B cell (primary cell): ENCODE measurements at regions of chr5 and their contacts with region 1.

Region 1: DNA sequence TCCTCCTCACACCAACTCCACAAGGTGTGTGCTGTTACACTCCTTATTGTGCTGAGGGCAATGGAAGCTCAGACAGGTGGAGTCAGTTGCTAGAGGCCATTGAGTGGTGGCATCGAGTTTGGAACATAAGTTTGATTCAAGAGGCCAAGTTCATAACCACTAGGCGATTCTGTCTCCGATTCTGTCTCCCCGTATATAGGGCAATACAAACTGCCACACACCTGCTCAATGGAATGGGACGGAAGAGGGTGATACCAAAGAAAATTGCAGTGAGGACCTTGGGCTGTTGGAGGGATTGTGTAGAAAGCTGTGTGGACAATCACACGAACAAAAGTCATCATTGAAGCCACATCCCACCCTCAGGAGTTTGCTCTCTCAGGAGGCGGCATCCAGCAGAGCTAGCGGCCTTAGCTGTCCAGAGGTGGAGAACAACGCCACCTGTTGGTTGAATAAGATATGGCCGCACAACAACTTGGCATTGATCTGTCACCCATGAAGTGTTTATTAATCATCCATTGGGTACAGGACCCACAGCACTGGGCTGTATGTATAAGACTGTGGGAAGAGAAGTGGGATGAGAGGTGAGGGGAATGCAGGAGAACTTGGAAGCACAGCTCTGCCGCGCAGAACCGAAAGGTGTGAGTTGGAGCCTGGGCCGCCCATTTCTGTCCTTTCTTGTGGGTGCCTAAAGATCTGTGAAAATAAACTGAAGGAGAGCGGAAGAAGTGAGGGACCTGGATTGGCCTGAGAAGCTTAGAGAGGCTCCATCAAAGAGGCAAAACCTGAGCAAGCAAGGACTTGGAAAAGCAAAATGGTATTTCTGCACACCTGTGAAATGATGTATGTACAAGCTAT is 16.1 kb upstream of the NEUROG1 start:
- DNase-seq: peak; percentile 44
- ATAC-seq: no peak
- H3K4me3 ChIP-seq: no peak overlapping the region
- H3K4me3 Mint-ChIP-seq: no peak overlapping the region
- H3K27ac ChIP-seq: no peak overlapping the region
- H3K27ac Mint-ChIP-seq: no peak overlapping the region
- H3K4me1 ChIP-seq: no peaks in the 10 kb centered on the region
- H3K4me1 Mint-ChIP-seq: no peaks in the 10 kb centered on the region
- H3K27me3 ChIP-seq: peaks cover 0 to 19% (median 5%) of the 10 kb centered on the region in 4 experiments
- H3K27me3 Mint-ChIP-seq: peaks cover 62% of the 10 kb centered on the region
- CTCF ChIP-seq: peak; percentile 69

Region 2: DNA sequence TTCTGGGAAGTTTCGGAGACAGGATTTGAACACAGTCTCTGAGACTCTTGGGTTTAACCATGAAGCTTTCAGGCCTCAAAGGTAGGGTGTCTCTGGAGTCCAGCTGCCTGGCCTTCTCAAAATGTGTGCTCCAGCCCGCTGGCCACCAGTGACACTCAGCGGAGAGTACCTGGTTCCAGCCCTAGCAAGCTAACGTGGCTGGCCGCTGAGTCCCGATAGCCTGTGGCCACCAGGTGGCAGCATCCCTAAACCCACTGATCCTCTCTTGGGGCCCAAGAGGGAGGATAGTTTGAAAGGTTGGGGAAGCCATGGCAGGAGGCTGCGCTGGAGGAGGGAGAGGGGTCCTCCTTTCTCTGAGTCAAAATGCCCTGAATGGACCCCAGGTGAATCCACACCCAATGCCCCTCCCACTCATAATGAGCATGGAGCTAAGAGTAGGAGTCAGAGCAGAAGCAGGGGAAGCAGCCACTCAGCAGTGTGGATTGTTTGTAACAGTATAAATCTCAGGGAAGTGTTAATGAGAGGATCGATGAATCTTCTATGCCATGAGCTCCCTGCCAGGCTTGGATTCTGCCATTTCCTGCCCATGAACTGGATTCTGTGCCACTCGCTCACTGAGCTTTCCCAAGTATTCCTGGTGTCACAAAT is 94.3 kb before region 1 on chr5:
- CTCF ChIA-PET with region 1: interaction called, 10 read pairs
- POLR2A ChIA-PET with region 1: no interaction called
- intact Hi-C with region 1: no loop called
- DNase-seq: peak; percentile 58
- ATAC-seq: no peak
- H3K4me3 ChIP-seq: no peak overlapping the region
- H3K4me3 Mint-ChIP-seq: no peak overlapping the region
- H3K27ac ChIP-seq: no peak overlapping the region
- H3K27ac Mint-ChIP-seq: no peak overlapping the region
- H3K4me1 ChIP-seq: no peaks in the 10 kb centered on the region
- H3K4me1 Mint-ChIP-seq: peaks cover 3% of the 10 kb centered on the region
- H3K27me3 ChIP-seq: peaks cover 0 to 6% (median 2%) of the 10 kb centered on the region in 4 experiments
- H3K27me3 Mint-ChIP-seq: peaks cover 36% of the 10 kb centered on the region
- CTCF ChIP-seq: peak; percentile 84

Region 3: GRCh38 chr5:135565725-135566421 is 14.1 kb after region 1 on chr5:
- CTCF ChIA-PET with region 1: interaction called, 10 read pairs
- POLR2A ChIA-PET with region 1: no interaction called
- intact Hi-C with region 1: no loop called
- DNase-seq: peak; percentile 53
- ATAC-seq: no peak
- H3K4me3 ChIP-seq: no peak overlapping the region
- H3K4me3 Mint-ChIP-seq: no peak overlapping the region
- H3K27ac ChIP-seq: no peak overlapping the region
- H3K27ac Mint-ChIP-seq: no peak overlapping the region
- H3K4me1 ChIP-seq: no peaks in the 10 kb centered on the region
- H3K4me1 Mint-ChIP-seq: peaks cover under 1% of the 10 kb centered on the region
- H3K27me3 ChIP-seq: peaks cover 0 to 6% (median 0%) of the 10 kb centered on the region in 4 experiments
- H3K27me3 Mint-ChIP-seq: peaks cover 13% of the 10 kb centered on the region
- CTCF ChIP-seq: peak; percentile 76